ENCODE measurements at regions of chr1 and their contacts with region 1.

Region 1: DNA sequence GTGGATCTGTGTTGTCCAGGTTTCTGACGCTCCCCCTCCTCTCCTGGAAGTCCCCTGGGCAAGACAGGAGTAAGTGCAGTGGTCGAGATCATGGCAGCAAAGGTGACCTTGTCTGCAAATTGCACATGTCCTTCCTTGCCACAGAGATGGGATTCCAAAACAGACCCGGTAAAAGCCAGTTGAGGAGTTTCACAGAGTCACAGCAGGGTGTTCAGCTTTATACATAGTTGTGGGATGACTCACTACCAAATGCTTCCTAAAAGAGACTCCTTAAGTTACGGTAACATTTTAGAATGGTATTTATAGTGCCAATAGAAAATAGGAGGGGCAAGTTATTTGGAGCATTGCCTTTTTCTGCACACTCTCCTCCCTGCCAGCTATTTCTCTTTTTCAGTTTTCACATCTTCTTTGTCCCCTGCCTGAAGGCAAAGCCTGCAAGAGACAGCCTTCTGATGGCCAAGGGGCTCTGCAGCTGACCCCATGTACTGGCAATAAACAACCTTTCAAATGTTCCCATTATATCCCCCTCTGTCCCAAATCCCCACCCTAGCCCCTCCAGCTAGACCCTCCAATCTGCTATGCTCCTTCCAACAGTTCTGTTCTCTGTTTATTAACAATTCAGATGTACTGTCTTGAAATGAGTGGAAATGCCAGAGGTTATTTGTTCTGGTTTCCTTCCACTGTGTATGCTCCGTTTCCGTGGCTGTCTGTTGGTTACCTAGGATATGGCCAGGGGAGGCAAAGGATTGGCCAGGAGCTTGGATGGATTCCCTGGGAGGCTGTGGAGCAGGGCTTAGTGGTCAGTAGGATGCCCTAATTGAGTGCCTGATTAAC is 115.0 kb downstream of the TGFB2 start:
- DNase-seq: peak; percentile 84
- ATAC-seq: peak; percentile 90
- H3K4me3 ChIP-seq: no peak overlapping the region
- H3K27ac ChIP-seq: peak overlapping the region; percentile 74
- H3K4me1 ChIP-seq: peaks cover 20% of the 10 kb centered on the region
- H3K27me3 ChIP-seq: no peaks in the 10 kb centered on the region
- CTCF ChIP-seq: no peak
- POLR2A ChIP-seq: no peak
- RAD21 ChIP-seq: no peak

Region 2: GRCh38 chr1:218371927-218372672 is 88.0 kb before region 1 on chr1:
- CTCF ChIA-PET with region 1: no interaction called
- POLR2A ChIA-PET with region 1: no interaction called
- dilution Hi-C with region 1: no loop called
- in situ Hi-C with region 1: no loop called
- intact Hi-C with region 1: loop called (anchors 5 kb)
- DNase-seq: peak; percentile 59
- ATAC-seq: no peak
- H3K4me3 ChIP-seq: no peak overlapping the region
- H3K27ac ChIP-seq: peak overlapping the region; percentile 22; the same call in 1 of the 2 replicates
- H3K4me1 ChIP-seq: peaks cover 31% of the 10 kb centered on the region
- H3K27me3 ChIP-seq: no peaks in the 10 kb centered on the region
- CTCF ChIP-seq: no peak
- POLR2A ChIP-seq: no peak
- RAD21 ChIP-seq: no peak

Measured in IMR-90 (cell line).